ENCODE measurements at regions of chr11 and their contacts with region 1.

Region 1: DNA sequence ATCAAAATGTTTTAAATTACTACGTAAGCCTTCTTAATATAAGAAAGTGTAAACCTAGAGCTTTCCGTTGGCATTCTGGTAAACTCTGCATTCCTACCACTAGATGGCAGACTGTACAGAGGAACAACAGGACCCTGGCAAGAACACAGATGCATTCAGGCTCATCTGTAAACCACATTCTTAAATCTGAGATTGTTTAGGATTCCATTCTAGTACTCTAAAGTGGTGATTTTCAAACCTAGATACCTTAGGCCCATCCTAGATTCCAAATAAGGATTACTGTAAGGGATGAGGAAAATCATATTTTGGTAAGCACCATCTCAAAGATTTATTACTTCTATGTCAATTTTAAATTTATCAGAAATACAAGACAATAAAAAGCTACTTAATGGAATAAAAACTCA is 26.9 kb downstream of the PICALM start:
- DNase-seq: no peak
- H3K4me3 ChIP-seq: peak overlapping the region in 2 of 8 donors; percentile 11 to 21
- H3K27ac ChIP-seq: peak overlapping the region in 7 of 8 donors; percentile 42 to 75 (median 61)
- H3K4me1 ChIP-seq: peaks cover 49 to 97% (median 86%) of the 10 kb centered on the region in 6 donors
- H3K27me3 ChIP-seq: no peaks in the 10 kb centered on the region
- CTCF ChIP-seq: peak; percentile 74 to 93 (median 90)
- POLR2A ChIP-seq: no peak

Region 2: GRCh38 chr11:86193297-86194095 is 151.5 kb after region 1 on chr11:
- intact Hi-C with region 1: loop called (anchors 5 kb)
- DNase-seq: peak; percentile 85
- H3K4me3 ChIP-seq: peak overlapping the region in 5 of 8 donors; percentile 18 to 61 (median 24)
- H3K27ac ChIP-seq: peak overlapping the region; percentile 49 to 89 (median 82)
- H3K4me1 ChIP-seq: peaks cover 15 to 65% (median 31%) of the 10 kb centered on the region in 6 donors
- H3K27me3 ChIP-seq: no peaks in the 10 kb centered on the region
- CTCF ChIP-seq: peak; percentile 60 to 91 (median 79)
- POLR2A ChIP-seq: no peak